Vagina (tissue), 2 donors: ENCODE measurements at regions of chr18 and their contacts with region 1.

Region 1: DNA sequence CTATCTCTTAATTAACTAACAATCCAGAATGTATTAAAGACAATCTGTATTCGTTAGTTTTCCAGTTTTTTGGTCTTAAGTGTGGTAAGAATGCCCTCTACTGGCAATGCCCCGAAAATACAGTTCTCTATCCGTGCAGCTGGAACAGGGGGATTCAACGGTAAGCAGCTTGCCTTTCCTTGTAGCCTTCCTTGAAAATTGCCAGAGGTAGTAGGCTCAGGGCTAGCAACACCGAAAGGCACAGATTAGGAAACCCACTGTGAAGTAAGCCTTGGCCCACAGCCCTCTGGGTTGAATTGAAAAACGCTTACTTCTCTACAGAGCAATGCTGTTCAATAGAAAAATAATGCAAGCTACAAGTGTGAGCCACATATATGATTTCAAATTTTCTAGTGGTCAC is 17.1 kb upstream of the VPS4B start:
- DNase-seq: no peak
- H3K4me3 ChIP-seq: no peak overlapping the region
- H3K27ac ChIP-seq: no peak overlapping the region
- H3K4me1 ChIP-seq: peaks cover 16% of the 10 kb centered on the region
- H3K27me3 ChIP-seq: no peaks in the 10 kb centered on the region
- CTCF ChIP-seq: peak; percentile 68 to 77 (median 74)
- POLR2A ChIP-seq: no peak

Region 2: GRCh38 chr18:63119647-63120046 is 319.7 kb before region 1 on chr18:
- intact Hi-C with region 1: loop called (anchors 10 kb)
- DNase-seq: no peak
- H3K4me3 ChIP-seq: no peak overlapping the region
- H3K27ac ChIP-seq: no peak overlapping the region
- H3K4me1 ChIP-seq: no peaks in the 10 kb centered on the region
- H3K27me3 ChIP-seq: no peaks in the 10 kb centered on the region
- CTCF ChIP-seq: peak in 1 of 3 experiments; percentile 39
- POLR2A ChIP-seq: no peak

Region 3: GRCh38 chr18:63648241-63648640 is 208.9 kb after region 1 on chr18:
- intact Hi-C with region 1: no loop called
- DNase-seq: no peak
- H3K4me3 ChIP-seq: no peak overlapping the region
- H3K27ac ChIP-seq: no peak overlapping the region
- H3K4me1 ChIP-seq: no peaks in the 10 kb centered on the region
- H3K27me3 ChIP-seq: no peaks in the 10 kb centered on the region
- CTCF ChIP-seq: no peak
- POLR2A ChIP-seq: no peak